Activated CD4-positive, alpha-beta memory T cell treated with anti-CD3 and anti-CD28 coated beads, Interleukin-2, amount 10 ng/mL, durations not matched to agents 7 days and 5 days (primary cell): ENCODE measurements at regions of chr4 and their contacts with region 1.

Region 1: DNA sequence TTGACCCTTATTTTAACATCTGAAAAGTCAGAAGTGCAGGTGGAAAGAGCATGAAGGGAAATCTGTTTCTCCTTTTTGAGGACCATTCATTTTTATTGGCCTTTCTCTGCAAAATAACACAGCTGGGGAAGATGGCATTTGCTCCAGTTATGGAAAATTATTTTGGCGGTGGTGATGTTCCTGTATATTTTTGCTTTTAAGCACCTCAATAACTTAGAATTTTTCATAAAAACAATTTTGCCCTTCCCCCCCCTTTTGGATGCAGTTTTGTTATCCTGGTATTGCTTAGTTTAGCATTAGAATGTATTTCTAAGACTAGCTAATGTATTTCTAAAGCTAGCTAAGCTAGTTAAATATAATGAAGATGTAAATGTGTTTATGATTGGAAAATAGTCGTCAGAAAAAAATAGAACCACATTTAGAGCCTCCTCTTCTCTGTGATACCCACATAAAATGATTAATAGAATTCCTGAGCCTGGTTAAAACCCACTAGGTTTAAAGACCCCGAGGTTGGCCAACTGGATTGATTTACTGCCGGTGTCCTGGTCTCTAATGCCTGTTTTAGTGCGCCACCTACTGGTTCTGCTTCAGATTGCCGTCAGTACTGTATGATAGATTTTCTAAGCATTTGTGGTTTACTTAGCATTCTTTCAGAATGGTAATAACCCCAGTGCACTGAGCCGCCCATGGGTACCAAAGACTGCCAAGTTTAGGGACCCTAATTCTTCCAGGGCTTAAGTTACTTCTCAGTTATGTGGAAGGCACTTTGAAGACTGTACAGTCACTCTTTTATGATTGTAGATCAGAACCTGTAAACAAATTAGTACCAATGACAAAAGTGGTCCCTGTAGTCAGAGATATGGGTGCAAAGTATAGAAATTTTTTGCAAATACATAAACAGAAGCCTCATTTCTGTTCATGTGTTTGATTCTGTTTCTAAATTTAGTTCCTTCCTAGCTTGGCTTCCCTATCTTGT is 11.4 kb downstream of the KLF3 start:
- DNase-seq: peak; percentile 83
- H3K4me3 Mint-ChIP-seq: no peak overlapping the region
- H3K27ac Mint-ChIP-seq: no peak overlapping the region
- H3K4me1 Mint-ChIP-seq: peaks cover 59% of the 10 kb centered on the region
- H3K27me3 Mint-ChIP-seq: no peaks in the 10 kb centered on the region

Region 2: DNA sequence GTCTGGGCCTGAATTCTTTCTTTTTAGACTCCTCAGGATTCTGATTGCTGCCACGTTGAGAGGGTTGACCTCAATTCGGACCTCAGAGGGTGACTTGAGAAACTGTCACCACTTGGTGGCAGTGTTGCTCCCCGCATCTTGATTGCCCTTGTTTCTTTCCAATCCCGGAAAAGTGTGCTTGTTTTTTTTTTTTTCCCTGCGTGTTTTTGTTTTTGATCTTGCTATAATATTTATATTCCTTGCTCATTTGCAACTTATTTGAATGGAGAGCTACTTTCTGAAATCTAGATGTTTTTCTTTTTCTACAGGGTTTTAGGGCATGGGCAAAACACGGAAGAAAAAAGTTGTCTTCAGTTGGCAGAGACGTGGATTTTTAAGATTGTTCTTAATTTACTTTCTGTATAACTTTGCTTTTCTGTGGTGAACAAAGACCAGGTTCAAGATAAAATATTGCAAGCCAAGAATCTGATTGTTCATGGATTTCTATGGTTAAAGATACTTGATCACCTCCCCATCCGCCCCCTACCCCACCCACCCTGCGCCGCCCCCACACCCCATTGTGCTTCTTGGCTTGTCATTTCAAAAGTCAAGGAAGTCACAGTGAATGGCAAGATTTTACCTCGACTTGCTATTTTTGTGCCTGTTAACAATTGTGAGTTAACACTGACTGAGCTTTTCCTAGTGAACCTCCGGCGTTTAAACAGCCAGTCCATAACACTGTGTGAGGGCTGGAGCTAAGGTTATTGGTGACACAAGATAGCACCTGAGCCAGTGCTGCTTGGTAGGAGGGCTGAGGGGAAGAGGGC is 613.1 kb before region 1 on chr4:
- CTCF ChIA-PET with region 1: interaction called, 13 read pairs
- POLR2A ChIA-PET with region 1: no interaction called
- DNase-seq: peak; percentile 72
- H3K4me3 Mint-ChIP-seq: peak overlapping the region; percentile 64
- H3K27ac Mint-ChIP-seq: peak overlapping the region; percentile 10
- H3K4me1 Mint-ChIP-seq: peaks cover 15% of the 10 kb centered on the region
- H3K27me3 Mint-ChIP-seq: no peaks in the 10 kb centered on the region

Region 3: DNA sequence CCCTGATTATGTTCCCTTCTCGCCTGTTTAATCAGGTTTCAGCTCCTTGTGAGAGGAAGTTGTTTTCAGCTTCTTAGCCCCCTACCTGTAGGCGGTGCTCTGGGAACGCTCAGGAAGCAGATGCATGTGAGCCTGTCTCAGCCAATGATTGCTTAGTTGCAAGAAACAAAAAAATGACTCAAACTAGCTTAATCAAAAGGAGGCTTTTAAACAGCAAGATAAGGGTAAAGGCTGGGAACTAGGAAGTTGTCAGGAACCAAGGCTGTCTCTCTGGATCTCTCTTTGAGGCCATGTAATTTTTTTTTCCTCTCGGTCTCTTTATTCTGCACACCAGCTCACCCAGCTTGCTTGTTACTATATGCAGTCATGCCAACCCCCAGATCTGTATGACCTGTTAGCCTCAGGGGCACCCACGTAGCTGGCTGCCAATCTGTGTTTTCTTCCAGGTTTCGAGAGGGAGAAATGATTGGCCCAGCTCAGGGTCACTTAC is 606.1 kb before region 1 on chr4:
- CTCF ChIA-PET with region 1: interaction called, 14 read pairs
- POLR2A ChIA-PET with region 1: no interaction called
- DNase-seq: peak; percentile 31
- H3K4me3 Mint-ChIP-seq: no peak overlapping the region
- H3K27ac Mint-ChIP-seq: no peak overlapping the region
- H3K4me1 Mint-ChIP-seq: peaks cover 22% of the 10 kb centered on the region
- H3K27me3 Mint-ChIP-seq: no peaks in the 10 kb centered on the region

Region 4: DNA sequence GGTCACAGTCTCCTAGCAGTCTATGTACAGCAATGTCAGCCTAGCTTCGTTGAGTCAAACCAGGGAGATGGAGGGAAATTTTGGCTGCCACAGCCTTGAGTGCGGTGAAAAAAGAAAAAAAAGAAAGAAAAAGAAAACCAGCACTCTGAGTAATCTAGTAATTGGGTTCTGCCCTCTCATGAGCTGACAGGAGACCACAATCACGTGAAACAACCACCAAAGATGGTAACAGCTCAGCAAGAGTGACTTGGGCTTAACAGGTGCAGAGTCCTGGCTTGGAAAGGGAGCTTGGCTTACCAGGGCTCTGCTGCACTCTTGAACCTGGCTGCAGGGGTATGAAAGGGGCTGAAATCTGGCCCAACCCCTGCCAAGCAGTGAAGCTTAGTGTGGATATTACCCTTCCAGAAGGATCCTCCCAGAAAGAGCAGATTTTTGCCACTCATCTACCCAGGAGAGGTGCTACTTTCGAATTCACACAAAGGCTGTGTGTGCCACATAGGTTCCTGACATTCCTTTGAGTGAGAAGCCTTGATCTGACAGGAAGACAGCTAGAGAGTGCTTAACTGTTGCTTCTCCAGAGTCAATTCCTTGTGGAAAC is 364.9 kb before region 1 on chr4:
- CTCF ChIA-PET with region 1: interaction called, 12 read pairs
- POLR2A ChIA-PET with region 1: interaction called, 4 read pairs
- DNase-seq: peak; percentile 82
- H3K4me3 Mint-ChIP-seq: peak overlapping the region; percentile 36
- H3K27ac Mint-ChIP-seq: peak overlapping the region; percentile 80
- H3K4me1 Mint-ChIP-seq: peaks cover 68% of the 10 kb centered on the region
- H3K27me3 Mint-ChIP-seq: peaks cover 43% of the 10 kb centered on the region

Region 5: DNA sequence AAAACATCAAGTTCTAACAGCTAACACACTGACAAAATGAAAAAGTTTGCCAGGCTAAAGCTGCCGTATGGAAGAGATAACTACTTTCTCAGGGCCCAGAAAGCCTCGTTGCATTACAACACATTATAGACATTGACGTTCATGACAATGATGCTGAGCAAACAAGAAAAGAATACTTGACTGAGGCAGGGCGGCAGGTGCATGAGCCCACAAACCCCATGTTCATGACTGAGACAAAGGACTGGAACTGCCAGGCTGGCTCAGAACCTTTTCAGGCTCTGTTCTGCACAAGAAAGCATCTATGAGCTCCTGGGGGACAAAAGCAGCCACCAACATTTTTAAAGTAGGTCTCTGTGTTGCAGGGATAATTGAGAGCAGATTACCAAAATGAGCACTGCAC is 167.6 kb after region 1 on chr4:
- CTCF ChIA-PET with region 1: no interaction called
- POLR2A ChIA-PET with region 1: no interaction called
- DNase-seq: no peak
- H3K4me3 Mint-ChIP-seq: no peak overlapping the region
- H3K27ac Mint-ChIP-seq: no peak overlapping the region
- H3K4me1 Mint-ChIP-seq: peaks cover 14% of the 10 kb centered on the region
- H3K27me3 Mint-ChIP-seq: no peaks in the 10 kb centered on the region